PC-9 (cell line): ENCODE measurements at regions of chr19 and their contacts with region 1.

Region 1: GRCh38 chr19:40465557-40466150 is at the start of gene BLVRB:
- DNase-seq: peak; percentile 94 to 99
- H3K4me3 ChIP-seq: peak within 1 kb of the TSS; percentile 82
- H3K27ac ChIP-seq: peak within 1 kb of the TSS; percentile 98
- H3K4me1 ChIP-seq: peaks cover 22% of the 10 kb centered on the region
- H3K27me3 ChIP-seq: no peaks in the 10 kb centered on the region
- CTCF ChIP-seq: no peak
- total RNA-seq, gene BLVRB: 204 and 239 TPM in 2 replicates

Region 2: GRCh38 chr19:40335855-40336600 is 129.6 kb before region 1 on chr19:
- CTCF ChIA-PET with region 1: no interaction called
- POLR2A ChIA-PET with region 1: interaction called, 36 read pairs
- intact Hi-C with region 1: no loop called
- DNase-seq: no peak
- H3K4me3 ChIP-seq: no peak overlapping the region
- H3K27ac ChIP-seq: no peak overlapping the region
- H3K4me1 ChIP-seq: no peaks in the 10 kb centered on the region
- H3K27me3 ChIP-seq: no peaks in the 10 kb centered on the region
- CTCF ChIP-seq: no peak

Region 3: GRCh38 chr19:40392872-40393845 is 72.5 kb before region 1 on chr19:
- CTCF ChIA-PET with region 1: no interaction called
- POLR2A ChIA-PET with region 1: no interaction called
- intact Hi-C with region 1: loop called (anchors 2 kb)
- DNase-seq: peak; percentile 70 to 85
- H3K4me3 ChIP-seq: peak overlapping the region; percentile 40; the same call in 1 of the 2 replicates
- H3K27ac ChIP-seq: peak overlapping the region; percentile 33; the same call in 1 of the 2 replicates
- H3K4me1 ChIP-seq: peaks cover 18% of the 10 kb centered on the region
- H3K27me3 ChIP-seq: no peaks in the 10 kb centered on the region
- CTCF ChIP-seq: peak; percentile 76

Region 4: DNA sequence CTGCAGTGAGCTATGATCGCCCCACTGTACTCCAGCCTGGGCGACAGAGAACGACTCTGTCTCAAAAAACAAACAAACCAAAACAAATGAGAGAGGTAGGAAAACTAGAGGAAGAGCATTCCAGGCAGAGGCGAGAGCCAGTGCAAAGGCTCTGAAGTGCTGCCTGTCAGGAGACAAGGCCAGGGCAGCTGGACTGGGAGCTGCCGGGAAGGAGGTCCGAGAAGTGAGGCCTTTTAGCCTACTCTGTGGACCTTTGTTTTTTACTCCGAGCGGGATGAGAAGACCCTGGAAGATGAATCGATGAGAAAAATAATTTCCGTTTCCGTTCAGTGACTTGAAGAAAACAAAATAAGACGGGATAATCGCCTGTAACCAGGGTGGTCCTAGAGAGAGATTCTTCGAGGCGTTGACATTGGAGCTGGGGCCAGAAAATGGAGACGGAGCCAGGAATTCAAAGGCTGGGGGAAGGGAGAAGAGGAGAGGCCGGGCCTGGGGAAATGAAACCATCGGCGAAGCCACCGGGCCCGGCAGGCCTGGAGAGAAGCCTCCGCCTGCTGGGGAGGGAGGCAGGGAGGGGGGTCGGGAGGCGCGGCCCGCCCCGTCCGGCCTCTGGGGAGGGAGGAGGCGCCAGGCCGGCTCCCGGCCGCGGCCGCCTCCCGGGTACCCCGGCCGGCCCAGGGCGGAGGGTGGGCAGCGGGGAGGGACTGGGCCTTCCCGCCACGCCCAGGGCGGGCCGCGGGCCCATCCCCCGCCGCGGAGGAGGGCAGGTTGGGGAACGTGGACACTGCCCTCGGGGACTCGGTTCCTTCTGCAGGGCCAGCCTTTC is 32.0 kb before region 1 on chr19:
- CTCF ChIA-PET with region 1: no interaction called
- POLR2A ChIA-PET with region 1: interaction called, 17 read pairs
- intact Hi-C with region 1: no loop called
- DNase-seq: peak; percentile 75 to 96
- H3K4me3 ChIP-seq: peak overlapping the region; percentile 63
- H3K27ac ChIP-seq: peak overlapping the region; percentile 89
- H3K4me1 ChIP-seq: peaks cover 29% of the 10 kb centered on the region
- H3K27me3 ChIP-seq: no peaks in the 10 kb centered on the region
- CTCF ChIP-seq: no peak

Region 5: GRCh38 chr19:40513741-40514315 is 48.2 kb after region 1 on chr19:
- CTCF ChIA-PET with region 1: interaction called, 17 read pairs
- POLR2A ChIA-PET with region 1: no interaction called
- intact Hi-C with region 1: no loop called
- DNase-seq: no peak
- H3K4me3 ChIP-seq: no peak overlapping the region
- H3K27ac ChIP-seq: no peak overlapping the region
- H3K4me1 ChIP-seq: no peaks in the 10 kb centered on the region
- H3K27me3 ChIP-seq: peaks cover 22% of the 10 kb centered on the region
- CTCF ChIP-seq: no peak

Region 6: GRCh38 chr19:40542202-40542859 is 76.7 kb after region 1 on chr19:
- CTCF ChIA-PET with region 1: interaction called, 3 read pairs
- POLR2A ChIA-PET with region 1: interaction called, 14 read pairs
- intact Hi-C with region 1: no loop called
- DNase-seq: no peak
- H3K4me3 ChIP-seq: no peak overlapping the region
- H3K27ac ChIP-seq: no peak overlapping the region
- H3K4me1 ChIP-seq: no peaks in the 10 kb centered on the region
- H3K27me3 ChIP-seq: no peaks in the 10 kb centered on the region
- CTCF ChIP-seq: no peak

Region 7: GRCh38 chr19:40609561-40610395 is 144.1 kb after region 1 on chr19:
- CTCF ChIA-PET with region 1: interaction called, 3 read pairs
- POLR2A ChIA-PET with region 1: interaction called, 10 read pairs
- intact Hi-C with region 1: loop called (anchors 2 kb)
- DNase-seq: peak; percentile 77 to 95
- H3K4me3 ChIP-seq: peak overlapping the region; percentile 63
- H3K27ac ChIP-seq: no peak overlapping the region
- H3K4me1 ChIP-seq: peaks cover 18% of the 10 kb centered on the region
- H3K27me3 ChIP-seq: no peaks in the 10 kb centered on the region
- CTCF ChIP-seq: no peak

Region 8: GRCh38 chr19:42023121-42023942 is 1557.7 kb after region 1 on chr19:
- CTCF ChIA-PET with region 1: no interaction called
- POLR2A ChIA-PET with region 1: no interaction called
- intact Hi-C with region 1: no loop called
- DNase-seq: peak in 1 of 2 experiments; percentile 18
- H3K4me3 ChIP-seq: no peak overlapping the region
- H3K27ac ChIP-seq: no peak overlapping the region
- H3K4me1 ChIP-seq: no peaks in the 10 kb centered on the region
- H3K27me3 ChIP-seq: peaks cover 20% of the 10 kb centered on the region; the same call in 1 of the 2 replicates
- CTCF ChIP-seq: peak; percentile 60